ENCODE measurements at regions of chr7 and their contacts with region 1.

Region 1: DNA sequence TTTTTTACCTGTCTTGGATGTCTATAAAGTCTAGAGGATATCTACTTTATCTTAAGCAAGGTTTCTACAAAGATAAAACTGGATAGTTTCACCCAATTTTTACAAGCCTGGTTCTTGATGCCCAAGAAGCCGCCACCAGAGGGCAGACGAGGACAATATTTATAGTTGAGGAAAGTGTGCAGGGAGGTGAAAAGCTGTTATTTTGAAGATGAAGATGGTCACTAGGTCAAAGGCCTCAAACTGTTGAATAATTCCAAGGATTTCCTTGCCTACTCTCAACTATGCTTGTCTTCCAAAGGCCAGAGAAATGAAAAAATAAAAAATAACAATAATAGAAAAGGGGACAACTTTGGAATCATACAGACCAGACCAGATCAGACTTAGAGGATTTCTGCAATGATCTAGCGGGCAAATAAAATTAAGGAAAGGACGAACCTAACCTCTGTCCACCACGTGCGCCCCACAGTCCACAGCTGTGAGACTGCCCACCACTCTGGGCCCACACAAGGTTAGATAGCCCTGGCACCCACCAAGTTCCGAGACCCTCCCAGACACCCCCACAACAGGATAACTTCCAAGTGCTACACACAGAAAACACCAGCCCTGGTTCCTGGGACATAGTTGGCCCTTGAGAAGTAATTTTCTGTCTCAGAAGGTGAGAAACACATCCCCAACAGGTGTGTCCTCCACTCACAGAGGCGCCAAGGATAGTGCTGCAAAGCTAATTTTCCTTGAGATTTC is 2.8 kb downstream of the PKD1L1 start:
- DNase-seq: peak; percentile 88
- ATAC-seq: no peak

Region 2: GRCh38 chr7:47968847-47969774 is 23.7 kb after region 1 on chr7:
- intact Hi-C with region 1: loop called (anchors 2 kb)
- DNase-seq: peak; percentile 68
- ATAC-seq: peak; percentile 72 to 80

Region 3: GRCh38 chr7:48109848-48110663 is 164.6 kb after region 1 on chr7:
- intact Hi-C with region 1: loop called in 1 of 2 experiments (anchors 2 kb)
- DNase-seq: peak; percentile 72
- ATAC-seq: peak; percentile 77 to 83

Region 4: DNA sequence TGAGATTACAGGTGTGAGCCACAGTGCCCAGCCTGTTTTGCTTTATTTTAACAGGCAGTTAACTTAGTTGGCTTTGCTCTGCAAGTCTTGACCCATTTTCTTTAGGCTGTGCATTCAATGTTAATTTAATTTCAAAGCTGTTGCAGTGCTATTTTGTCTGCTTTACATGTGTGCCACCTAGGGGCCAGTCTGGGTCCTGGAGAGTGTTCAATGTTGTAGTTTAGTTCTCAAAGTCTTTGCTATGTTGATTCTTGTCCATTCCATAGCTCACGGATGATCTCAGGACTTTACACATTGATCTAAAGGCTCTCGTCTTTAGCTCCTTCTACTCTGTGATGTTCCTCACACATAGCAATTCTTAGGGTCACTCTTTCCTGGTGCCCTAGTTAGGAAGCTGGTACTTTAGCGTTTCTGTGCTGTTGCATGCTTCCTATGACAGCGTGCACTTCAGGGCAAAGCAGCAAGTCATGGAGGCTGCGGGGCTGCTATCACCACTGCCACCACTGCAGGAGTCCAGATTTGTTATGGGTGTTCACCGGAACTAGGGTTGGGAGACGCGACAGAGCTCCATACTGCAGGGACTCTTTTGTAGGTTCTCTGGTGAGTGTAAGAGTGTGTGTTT is 209.5 kb after region 1 on chr7:
- intact Hi-C with region 1: no loop called
- DNase-seq: no peak
- ATAC-seq: no peak

Measured in left cardiac atrium (tissue), 4 donors.